PC-9 (cell line): ENCODE measurements at regions of chr1 and their contacts with region 1.

Region 1: GRCh38 chr1:70509996-70510876 is 99.2 kb downstream of the CTH start:
- DNase-seq: peak; percentile 3 to 95
- H3K4me3 ChIP-seq: no peak overlapping the region
- H3K27ac ChIP-seq: peak overlapping the region; percentile 52
- H3K4me1 ChIP-seq: peaks cover 7% of the 10 kb centered on the region
- H3K27me3 ChIP-seq: no peaks in the 10 kb centered on the region
- CTCF ChIP-seq: peak; percentile 86

Region 2: DNA sequence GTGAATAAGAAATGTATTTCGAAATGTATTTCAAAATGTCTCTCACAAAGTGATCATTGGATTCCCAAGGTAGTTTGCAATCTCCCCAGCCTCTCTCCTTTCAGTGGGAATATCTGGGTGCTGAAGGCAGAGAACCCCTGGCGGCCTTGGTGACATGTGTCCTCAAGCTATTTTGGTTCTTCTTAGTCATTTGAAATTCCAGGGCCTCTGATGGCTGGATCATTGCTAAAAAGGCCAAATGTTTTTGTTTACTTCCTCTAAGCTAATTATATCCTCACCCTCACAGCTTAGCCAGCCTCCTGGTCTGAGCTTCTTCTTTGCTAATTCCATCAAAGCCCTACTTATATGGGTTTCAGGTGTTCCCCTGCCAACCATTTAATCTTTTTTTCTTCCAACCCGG is 376.1 kb before region 1 on chr1:
- CTCF ChIA-PET with region 1: no interaction called
- POLR2A ChIA-PET with region 1: no interaction called
- intact Hi-C with region 1: loop called (anchors 1 kb)
- DNase-seq: no peak
- H3K4me3 ChIP-seq: no peak overlapping the region
- H3K27ac ChIP-seq: no peak overlapping the region
- H3K4me1 ChIP-seq: no peaks in the 10 kb centered on the region
- H3K27me3 ChIP-seq: no peaks in the 10 kb centered on the region
- CTCF ChIP-seq: no peak

Region 3: DNA sequence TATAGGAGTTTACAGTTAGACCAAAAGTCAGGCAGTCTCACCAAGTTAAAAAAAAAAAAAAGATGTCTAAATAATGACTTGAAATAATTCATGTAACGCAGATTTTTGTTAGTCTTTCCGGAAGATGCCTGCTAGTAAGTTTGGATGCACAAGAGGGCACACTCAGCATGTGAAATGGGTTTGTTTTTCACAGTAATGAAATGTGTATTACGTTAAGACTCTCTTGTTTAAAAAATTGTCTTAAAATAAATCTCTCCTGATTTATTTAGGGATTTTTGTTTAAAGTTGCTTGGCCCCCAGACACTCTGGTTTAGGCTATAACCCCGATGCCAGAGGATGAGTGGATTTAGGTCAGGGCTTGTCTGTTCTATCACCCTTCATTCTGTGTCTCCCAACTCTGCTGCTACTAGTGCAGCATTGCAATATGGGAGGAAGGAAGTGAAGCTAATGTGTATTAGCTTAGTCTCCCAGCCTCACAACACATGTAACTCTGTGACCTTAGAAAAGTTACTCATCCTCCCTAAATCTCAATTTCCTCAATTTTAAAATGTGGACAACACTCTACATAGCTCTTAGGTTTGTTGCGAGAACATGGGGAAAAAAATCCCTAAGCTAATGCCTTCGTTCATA is 73.5 kb before region 1 on chr1:
- CTCF ChIA-PET with region 1: no interaction called
- POLR2A ChIA-PET with region 1: no interaction called
- intact Hi-C with region 1: loop called (anchors 5 kb)
- DNase-seq: peak in 1 of 2 experiments; percentile 28
- H3K4me3 ChIP-seq: no peak overlapping the region
- H3K27ac ChIP-seq: no peak overlapping the region
- H3K4me1 ChIP-seq: no peaks in the 10 kb centered on the region
- H3K27me3 ChIP-seq: no peaks in the 10 kb centered on the region
- CTCF ChIP-seq: no peak

Region 4: DNA sequence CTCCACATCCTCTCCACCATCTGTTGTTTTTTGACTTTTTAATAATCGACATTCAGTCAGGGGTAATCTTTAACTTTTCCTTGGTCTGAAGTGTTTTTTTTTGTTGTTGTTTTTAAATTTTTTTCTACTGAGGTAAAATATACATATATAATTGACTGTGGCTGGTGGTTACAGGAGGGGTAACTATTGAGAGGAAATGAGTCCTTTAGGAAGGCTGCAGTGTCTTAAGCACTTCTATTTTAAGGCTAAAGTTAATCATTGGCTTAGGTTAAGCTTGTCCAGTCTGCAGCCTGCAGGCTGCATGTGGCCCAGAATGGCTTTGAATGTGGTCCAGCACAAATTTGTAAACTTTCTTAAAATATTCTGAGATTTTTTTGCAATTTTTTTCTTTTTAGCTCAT is 73.3 kb after region 1 on chr1:
- CTCF ChIA-PET with region 1: no interaction called
- POLR2A ChIA-PET with region 1: no interaction called
- intact Hi-C with region 1: no loop called
- DNase-seq: no peak
- H3K4me3 ChIP-seq: no peak overlapping the region
- H3K27ac ChIP-seq: no peak overlapping the region
- H3K4me1 ChIP-seq: no peaks in the 10 kb centered on the region
- H3K27me3 ChIP-seq: no peaks in the 10 kb centered on the region
- CTCF ChIP-seq: no peak